Activated CD4-positive, alpha-beta memory T cell treated with anti-CD3 and anti-CD28 coated beads for 36 hours (primary cell): ENCODE measurements at regions of chrX and their contacts with region 1.

Region 1: GRCh38 chrX:137432608-137433007 is 133.3 kb upstream of the ZIC3 start:
- DNase-seq: peak; percentile 18
- H3K4me3 Mint-ChIP-seq: no peak overlapping the region
- H3K27ac Mint-ChIP-seq: no peak overlapping the region
- H3K4me1 Mint-ChIP-seq: no peaks in the 10 kb centered on the region
- H3K27me3 Mint-ChIP-seq: peaks cover 22% of the 10 kb centered on the region

Region 2: DNA sequence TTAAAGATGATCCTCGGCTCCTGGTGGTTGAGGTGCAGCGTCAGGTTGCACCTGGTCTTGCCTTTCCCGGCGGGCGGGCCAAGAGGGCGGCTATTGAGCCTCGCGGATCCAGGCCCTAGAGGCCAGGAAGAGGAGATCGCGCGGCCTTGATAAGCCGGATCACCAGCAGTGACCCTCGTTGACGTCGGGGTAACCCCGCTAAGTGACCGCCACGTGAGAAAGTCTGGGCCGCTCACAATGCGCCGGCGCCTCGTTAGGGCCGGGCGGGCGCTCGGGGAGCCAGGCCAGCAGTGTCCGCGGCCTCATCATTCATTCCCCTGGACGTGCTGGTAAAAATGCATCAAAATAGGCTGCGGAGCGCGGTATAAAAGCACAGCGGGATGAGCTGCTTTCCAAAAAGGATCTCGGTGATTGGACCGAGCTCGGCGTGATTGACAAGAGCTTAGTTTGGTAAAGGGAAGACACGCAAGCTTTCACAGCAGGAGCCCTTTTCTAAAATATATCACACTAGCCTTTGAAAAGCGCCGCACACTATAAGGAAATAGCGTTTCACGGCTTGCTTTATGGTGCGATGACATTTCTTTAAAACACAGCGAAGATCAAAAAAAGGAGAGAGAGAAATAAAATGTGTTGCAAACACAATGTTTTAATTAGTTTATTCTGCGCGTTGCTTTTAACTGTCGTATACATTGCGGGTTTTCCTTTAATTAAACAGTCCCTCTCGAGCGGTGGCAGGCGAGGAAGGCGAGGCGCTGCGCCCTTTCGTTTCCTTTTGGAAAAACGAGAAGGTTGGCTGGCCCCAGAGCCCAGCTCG is 117.5 kb after region 1 on chrX:
- CTCF ChIA-PET with region 1: interaction called, 3 read pairs
- POLR2A ChIA-PET with region 1: no interaction called
- intact Hi-C with region 1: loop called (anchors 2 kb)
- DNase-seq: no peak
- H3K4me3 Mint-ChIP-seq: no peak overlapping the region
- H3K27ac Mint-ChIP-seq: no peak overlapping the region
- H3K4me1 Mint-ChIP-seq: peaks cover 9% of the 10 kb centered on the region
- H3K27me3 Mint-ChIP-seq: peaks cover 33% of the 10 kb centered on the region

Region 3: GRCh38 chrX:137565921-137566745 is 133.5 kb after region 1 on chrX and contains the start of gene ZIC3:
- CTCF ChIA-PET with region 1: no interaction called
- POLR2A ChIA-PET with region 1: no interaction called
- intact Hi-C with region 1: loop called (anchors 5 kb)
- DNase-seq: peak; percentile 40
- H3K4me3 Mint-ChIP-seq: peak within 1 kb of the TSS; percentile 54
- H3K27ac Mint-ChIP-seq: peak within 1 kb of the TSS; percentile 21
- H3K4me1 Mint-ChIP-seq: peaks cover 17% of the 10 kb centered on the region
- H3K27me3 Mint-ChIP-seq: peaks cover 38% of the 10 kb centered on the region
- total RNA-seq, gene ZIC3: not detected

Region 4: GRCh38 chrX:138026211-138026610 is 593.6 kb after region 1 on chrX:
- CTCF ChIA-PET with region 1: no interaction called
- POLR2A ChIA-PET with region 1: no interaction called
- intact Hi-C with region 1: loop called (anchors 10 kb)
- DNase-seq: no peak
- H3K4me3 Mint-ChIP-seq: no peak overlapping the region
- H3K27ac Mint-ChIP-seq: no peak overlapping the region
- H3K4me1 Mint-ChIP-seq: no peaks in the 10 kb centered on the region
- H3K27me3 Mint-ChIP-seq: no peaks in the 10 kb centered on the region

Region 5: DNA sequence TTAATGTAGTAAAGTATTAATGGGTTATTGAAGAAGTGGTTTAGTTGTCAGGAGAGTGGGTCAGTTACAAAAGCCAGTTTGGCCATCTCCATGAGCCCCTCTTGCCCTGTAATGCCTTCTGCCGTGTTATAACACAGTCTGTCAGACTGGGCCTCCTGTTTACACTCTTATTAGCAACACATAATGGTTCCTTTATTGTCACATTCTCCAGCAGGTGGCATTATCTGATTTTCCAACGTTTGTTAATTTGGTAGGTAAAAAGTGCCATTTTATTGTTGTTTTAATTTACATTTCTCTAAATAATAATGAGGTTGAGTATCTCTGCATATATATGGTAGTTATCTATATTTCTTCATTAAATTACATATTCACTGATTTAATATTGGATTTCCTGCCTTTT is 718.1 kb after region 1 on chrX:
- CTCF ChIA-PET with region 1: no interaction called
- POLR2A ChIA-PET with region 1: no interaction called
- intact Hi-C with region 1: no loop called
- DNase-seq: no peak
- H3K4me3 Mint-ChIP-seq: no peak overlapping the region
- H3K27ac Mint-ChIP-seq: no peak overlapping the region
- H3K4me1 Mint-ChIP-seq: no peaks in the 10 kb centered on the region
- H3K27me3 Mint-ChIP-seq: no peaks in the 10 kb centered on the region